ENCODE measurements at regions of chr17 and their contacts with region 1.

Region 1: GRCh38 chr17:49260011-49260921 is 29.7 kb upstream of the PHOSPHO1 start:
- DNase-seq: peak; percentile 78 to 83
- H3K4me3 ChIP-seq: peak overlapping the region; percentile 40
- H3K4me3 Mint-ChIP-seq: peak overlapping the region; percentile 79
- H3K27ac Mint-ChIP-seq: peak overlapping the region; percentile 56
- H3K4me1 ChIP-seq: no peaks in the 10 kb centered on the region
- H3K4me1 Mint-ChIP-seq: no peaks in the 10 kb centered on the region
- H3K27me3 ChIP-seq: no peaks in the 10 kb centered on the region
- H3K27me3 Mint-ChIP-seq: no peaks in the 10 kb centered on the region
- CTCF ChIP-seq: no peak

Region 2: GRCh38 chr17:49290690-49291359 is 30.6 kb after region 1 on chr17:
- CTCF ChIA-PET with region 1: interaction called, 16 read pairs
- POLR2A ChIA-PET with region 1: no interaction called
- intact Hi-C with region 1: no loop called
- DNase-seq: peak in 1 of 2 experiments; percentile 61
- H3K4me3 ChIP-seq: no peak overlapping the region
- H3K4me3 Mint-ChIP-seq: no peak overlapping the region
- H3K27ac Mint-ChIP-seq: no peak overlapping the region
- H3K4me1 ChIP-seq: no peaks in the 10 kb centered on the region
- H3K4me1 Mint-ChIP-seq: no peaks in the 10 kb centered on the region
- H3K27me3 ChIP-seq: no peaks in the 10 kb centered on the region
- H3K27me3 Mint-ChIP-seq: no peaks in the 10 kb centered on the region
- CTCF ChIP-seq: peak; percentile 91 to 92

Region 3: DNA sequence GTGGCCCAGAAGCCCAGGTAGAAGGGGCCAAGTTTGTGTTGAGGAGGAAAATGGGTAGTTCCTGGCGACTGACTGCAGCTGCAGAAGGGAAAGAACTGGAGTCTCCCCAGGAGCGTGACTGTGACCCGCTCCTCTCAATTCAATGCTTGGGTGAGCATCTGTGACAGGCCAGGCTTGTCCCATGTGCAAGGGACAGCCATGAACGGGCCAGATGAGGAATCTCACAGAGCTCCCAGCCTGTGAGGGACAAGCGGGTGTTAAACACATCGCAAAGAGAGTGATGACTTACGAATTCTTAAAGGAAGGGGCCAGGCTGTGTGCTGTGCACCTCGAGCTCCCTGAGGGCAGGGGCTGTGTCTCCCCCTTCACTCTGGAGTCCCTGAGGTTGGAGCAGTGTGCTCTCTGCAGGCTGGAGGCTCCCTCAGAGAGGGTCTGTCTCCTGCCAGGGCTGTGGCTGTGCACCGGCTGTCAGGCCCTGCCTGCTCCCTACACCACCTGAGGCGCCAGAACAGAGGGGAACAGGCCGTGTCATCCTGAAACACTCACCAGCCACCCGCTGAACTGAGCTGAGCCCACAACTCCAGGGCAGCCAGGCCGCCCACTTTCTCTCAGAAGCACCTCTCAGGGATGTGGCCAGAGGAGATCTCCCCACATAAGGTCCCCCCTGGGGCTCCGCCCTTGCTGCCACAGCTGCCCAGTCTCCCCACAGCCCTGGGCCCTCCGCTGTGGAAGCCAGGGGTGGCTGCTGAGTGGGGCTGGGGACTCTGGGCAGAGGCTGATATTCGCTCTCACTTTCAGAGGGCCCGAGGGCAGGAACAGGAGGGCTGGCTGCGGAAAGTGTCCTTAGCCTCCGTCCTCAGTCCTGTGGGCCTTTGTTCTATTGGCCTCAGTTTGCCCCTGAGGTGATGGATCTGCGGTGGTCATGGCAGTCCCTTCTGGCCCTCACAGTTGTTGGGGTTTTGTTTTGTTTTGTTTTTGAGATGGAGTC is 289.7 kb after region 1 on chr17:
- CTCF ChIA-PET with region 1: no interaction called
- POLR2A ChIA-PET with region 1: no interaction called
- intact Hi-C with region 1: no loop called
- DNase-seq: peak in 1 of 2 experiments; percentile 50
- H3K4me3 ChIP-seq: no peak overlapping the region
- H3K4me3 Mint-ChIP-seq: no peak overlapping the region
- H3K27ac Mint-ChIP-seq: no peak overlapping the region
- H3K4me1 ChIP-seq: peaks cover 5% of the 10 kb centered on the region; the same call in 1 of the 2 replicates
- H3K4me1 Mint-ChIP-seq: peaks cover 9% of the 10 kb centered on the region
- H3K27me3 ChIP-seq: no peaks in the 10 kb centered on the region
- H3K27me3 Mint-ChIP-seq: no peaks in the 10 kb centered on the region
- CTCF ChIP-seq: no peak

Measured in Caco-2 (cell line).